ENCODE measurements at regions of chrX and their contacts with region 1.

Region 1: DNA sequence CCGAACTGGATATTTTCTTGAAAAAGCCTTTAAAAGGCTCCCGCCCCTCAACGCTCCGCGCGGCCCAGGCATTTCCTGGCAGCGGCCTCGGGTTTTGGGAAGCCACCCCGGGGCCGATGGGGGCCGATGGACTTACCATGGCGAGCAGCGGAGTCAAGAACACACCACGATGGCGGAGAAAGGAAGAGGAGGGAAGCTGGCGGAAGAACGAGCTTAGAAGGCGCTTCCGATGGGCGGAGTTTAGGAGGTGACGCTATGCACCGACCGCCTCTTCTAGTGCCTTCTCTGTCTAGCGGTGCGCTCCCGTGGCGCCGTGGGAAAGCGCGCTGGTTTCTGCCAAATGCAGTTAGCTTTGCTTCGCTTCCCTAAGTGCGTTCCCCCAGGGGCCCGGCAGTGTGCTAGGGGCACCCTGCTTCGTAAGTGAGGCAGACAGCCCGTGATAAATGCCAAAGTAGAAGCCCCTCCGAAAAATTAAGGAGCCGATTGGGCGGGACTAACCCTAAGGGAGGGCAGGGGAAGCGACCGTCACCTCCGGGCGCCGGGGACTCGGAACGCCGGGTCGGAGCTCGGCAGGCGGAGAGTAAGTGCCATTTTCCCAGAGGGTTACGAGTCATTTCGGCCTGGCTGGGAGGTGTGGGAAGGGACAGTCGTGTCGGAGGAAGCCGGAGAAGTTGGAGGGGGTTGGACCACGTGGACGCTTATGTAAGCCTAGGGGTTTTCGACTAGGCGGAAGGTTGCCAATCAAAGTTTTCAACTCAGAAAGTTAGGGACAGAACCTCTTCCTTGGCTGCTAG is at the start of gene RPL39:
- DNase-seq: peak; percentile 81
- ATAC-seq: peak; percentile 95
- H3K4me3 ChIP-seq: peak within 1 kb of the TSS; percentile 77 to 83 (median 79)
- H3K27ac ChIP-seq: peak within 1 kb of the TSS; percentile 98
- H3K4me1 ChIP-seq: peaks cover 38% of the 10 kb centered on the region
- H3K27me3 ChIP-seq: no peaks in the 10 kb centered on the region
- CTCF ChIP-seq: no peak
- EP300 ChIP-seq: no peak
- POLR2A ChIP-seq: peak; percentile 88 to 92
- RAD21 ChIP-seq: peak; percentile 5; the same call in 1 of the 2 replicates
- total RNA-seq, gene RPL39: 3,547 and 3,928 TPM in 2 replicates

Region 2: DNA sequence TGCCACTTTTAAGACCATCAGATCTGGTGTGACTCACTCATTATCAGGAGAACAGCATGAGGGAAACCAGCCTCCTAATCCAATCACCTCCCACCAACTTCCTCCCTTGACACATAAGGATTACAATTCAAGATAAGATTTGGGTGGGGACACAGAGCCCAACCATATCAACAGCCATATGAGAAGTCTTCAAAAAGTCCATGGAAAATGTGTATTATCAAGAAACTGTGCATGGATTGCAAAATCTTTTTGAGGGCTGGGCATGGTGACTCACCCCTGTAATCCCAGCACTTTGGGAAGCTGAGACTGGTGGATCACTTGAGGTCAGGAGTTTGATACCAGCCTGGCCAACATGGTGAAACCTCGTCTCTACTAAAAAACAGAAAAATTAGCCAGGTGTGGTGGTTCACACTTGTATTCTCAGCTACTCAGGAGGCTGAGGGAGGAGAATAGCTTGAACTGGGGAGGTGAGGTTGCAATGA is 17.6 kb after region 1 on chrX:
- CTCF ChIA-PET with region 1: no interaction called
- POLR2A ChIA-PET with region 1: interaction called, 11 read pairs
- in situ Hi-C with region 1: no loop called
- intact Hi-C with region 1: no loop called
- DNase-seq: no peak
- ATAC-seq: no peak
- H3K4me3 ChIP-seq: no peak overlapping the region
- H3K27ac ChIP-seq: no peak overlapping the region
- H3K4me1 ChIP-seq: no peaks in the 10 kb centered on the region
- H3K27me3 ChIP-seq: no peaks in the 10 kb centered on the region
- CTCF ChIP-seq: no peak
- EP300 ChIP-seq: no peak
- POLR2A ChIP-seq: no peak
- RAD21 ChIP-seq: no peak

Region 3: GRCh38 chrX:119826399-119826959 is 34.8 kb after region 1 on chrX:
- CTCF ChIA-PET with region 1: no interaction called
- POLR2A ChIA-PET with region 1: interaction called, 14 read pairs
- in situ Hi-C with region 1: no loop called
- intact Hi-C with region 1: loop called (anchors 2 kb)
- DNase-seq: peak; percentile 76
- ATAC-seq: peak; percentile 77
- H3K4me3 ChIP-seq: peak overlapping the region in 1 of 3 experiments; percentile 10; a peak in 1 of 6 replicates
- H3K27ac ChIP-seq: peak overlapping the region; percentile 71
- H3K4me1 ChIP-seq: peaks cover 36% of the 10 kb centered on the region
- H3K27me3 ChIP-seq: no peaks in the 10 kb centered on the region
- CTCF ChIP-seq: no peak
- EP300 ChIP-seq: 0 out of 4 replicates have a peak, but pooled peaks of 1 of the 2 experiments have one; percentile 41
- POLR2A ChIP-seq: no peak
- RAD21 ChIP-seq: no peak

Region 4: DNA sequence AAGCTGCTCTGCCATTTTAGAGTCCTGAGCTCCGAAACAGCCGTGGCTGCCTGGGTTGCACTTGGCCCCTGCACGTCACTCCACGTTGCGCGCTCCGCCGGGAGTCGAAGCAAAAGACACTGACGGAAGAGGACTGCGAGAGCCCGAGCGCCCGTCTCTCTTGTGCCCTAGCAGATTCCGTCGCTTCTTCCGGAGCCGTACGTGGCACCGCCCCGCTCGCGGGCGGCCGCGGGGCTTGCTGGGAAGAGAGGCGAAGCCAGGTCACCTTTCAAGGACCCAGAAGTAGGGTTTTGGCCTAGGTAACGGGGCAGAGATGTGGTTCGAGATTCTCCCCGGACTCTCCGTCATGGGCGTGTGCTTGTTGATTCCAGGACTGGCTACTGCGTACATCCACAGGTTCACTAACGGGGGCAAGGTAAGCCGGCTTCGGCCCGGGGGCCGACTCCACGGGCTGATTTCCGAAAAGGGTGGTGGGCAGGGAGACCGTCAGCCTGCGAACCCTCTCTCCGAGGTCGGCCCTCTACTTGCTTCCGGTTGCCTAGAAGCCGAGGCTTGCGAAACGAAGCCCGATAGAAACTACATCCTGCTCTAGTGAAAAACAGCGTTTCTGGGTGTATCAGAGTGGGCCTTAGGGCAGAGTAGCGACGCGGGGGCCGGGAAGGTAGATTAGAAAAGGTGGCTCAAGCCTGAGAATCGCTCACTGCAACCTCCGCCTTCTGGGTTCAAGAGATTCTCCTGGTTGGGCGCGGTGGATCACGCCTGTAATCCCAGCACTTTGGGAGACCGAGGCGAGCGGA is 80.2 kb after region 1 on chrX and contains the starts of genes NDUFA1 and RNF113A:
- CTCF ChIA-PET with region 1: no interaction called
- POLR2A ChIA-PET with region 1: interaction called, 42 read pairs
- in situ Hi-C with region 1: no loop called
- intact Hi-C with region 1: loop called (anchors 2 kb)
- DNase-seq: peak; percentile 76
- ATAC-seq: peak; percentile 95
- H3K4me3 ChIP-seq: peak within 1 kb of the TSS; percentile 70 to 82 (median 74)
- H3K27ac ChIP-seq: peak within 1 kb of the TSS; percentile 99
- H3K4me1 ChIP-seq: peaks cover 4% of the 10 kb centered on the region; the same call in 1 of the 2 replicates
- H3K27me3 ChIP-seq: no peaks in the 10 kb centered on the region; a peak in 1 of 5 replicates
- CTCF ChIP-seq: no peak
- EP300 ChIP-seq: no peak
- POLR2A ChIP-seq: peak; percentile 86 to 90
- RAD21 ChIP-seq: no peak
- total RNA-seq, gene NDUFA1: 167 and 181 TPM in 2 replicates
- total RNA-seq, gene RNF113A: 15.4 and 21.4 TPM in 2 replicates